Calu3 (cell line): ENCODE measurements at regions of chr2 and their contacts with region 1.

Region 1: DNA sequence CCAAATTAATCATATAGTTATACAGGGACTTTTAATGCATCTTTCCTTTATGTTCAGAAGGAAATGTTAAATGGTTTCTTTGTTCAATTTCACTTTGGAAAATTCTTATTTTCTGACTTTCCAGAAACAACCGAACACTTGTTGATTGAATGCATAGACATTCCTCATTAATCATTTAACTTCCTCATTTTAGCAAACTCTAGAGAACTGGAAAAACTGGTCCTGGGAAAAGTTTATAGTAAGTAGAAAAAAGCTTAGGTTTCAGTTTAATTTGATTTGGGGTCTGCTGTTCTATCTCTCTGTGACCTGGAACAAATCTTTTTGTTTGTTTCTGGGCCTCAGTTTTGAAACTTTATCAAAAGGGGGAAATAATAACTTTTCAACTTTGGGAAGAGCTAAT is 320.4 kb downstream of the CMPK2 start:
- DNase-seq: no peak
- H3K4me3 Mint-ChIP-seq: no peak overlapping the region
- H3K27ac Mint-ChIP-seq: peak overlapping the region; percentile 47
- H3K4me1 Mint-ChIP-seq: peaks cover 19% of the 10 kb centered on the region
- H3K27me3 Mint-ChIP-seq: no peaks in the 10 kb centered on the region
- CTCF ChIP-seq: no peak

Region 2: DNA sequence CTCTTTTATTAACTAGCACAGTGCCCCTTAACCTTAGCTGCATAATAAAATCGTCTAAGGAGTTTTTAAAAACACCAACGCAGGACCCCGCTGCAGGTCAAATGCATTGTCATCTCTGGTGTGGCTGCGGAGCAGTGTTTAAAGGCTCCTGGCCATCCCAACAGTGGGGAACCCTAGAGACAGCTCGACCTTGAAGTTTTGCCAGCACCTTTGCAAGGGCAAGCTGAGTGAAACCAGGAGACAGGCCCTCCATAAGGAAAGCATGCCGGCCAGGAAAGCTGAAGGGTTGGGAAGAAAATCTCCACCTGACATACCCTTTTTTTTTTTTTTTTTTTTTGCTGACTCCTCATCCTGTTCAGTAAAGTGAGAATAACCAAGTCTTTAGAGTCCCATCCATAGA is 28.7 kb before region 1 on chr2:
- CTCF ChIA-PET with region 1: interaction called, 10 read pairs
- intact Hi-C with region 1: no loop called
- DNase-seq: no peak
- H3K4me3 Mint-ChIP-seq: no peak overlapping the region
- H3K27ac Mint-ChIP-seq: no peak overlapping the region
- H3K4me1 Mint-ChIP-seq: no peaks in the 10 kb centered on the region
- H3K27me3 Mint-ChIP-seq: no peaks in the 10 kb centered on the region
- CTCF ChIP-seq: no peak

Region 3: GRCh38 chr2:6580982-6581381 is 35.6 kb after region 1 on chr2:
- CTCF ChIA-PET with region 1: no interaction called
- intact Hi-C with region 1: no loop called
- DNase-seq: no peak
- H3K4me3 Mint-ChIP-seq: no peak overlapping the region
- H3K27ac Mint-ChIP-seq: no peak overlapping the region
- H3K4me1 Mint-ChIP-seq: no peaks in the 10 kb centered on the region
- H3K27me3 Mint-ChIP-seq: no peaks in the 10 kb centered on the region
- CTCF ChIP-seq: no peak

Region 4: GRCh38 chr2:6999211-6999877 is 454.0 kb after region 1 on chr2:
- CTCF ChIA-PET with region 1: no interaction called
- intact Hi-C with region 1: no loop called
- DNase-seq: no peak
- H3K4me3 Mint-ChIP-seq: no peak overlapping the region
- H3K27ac Mint-ChIP-seq: no peak overlapping the region
- H3K4me1 Mint-ChIP-seq: no peaks in the 10 kb centered on the region
- H3K27me3 Mint-ChIP-seq: no peaks in the 10 kb centered on the region
- CTCF ChIP-seq: no peak

Region 5: GRCh38 chr2:7057865-7058400 is 512.6 kb after region 1 on chr2:
- CTCF ChIA-PET with region 1: no interaction called
- intact Hi-C with region 1: no loop called
- DNase-seq: no peak
- H3K4me3 Mint-ChIP-seq: no peak overlapping the region
- H3K27ac Mint-ChIP-seq: no peak overlapping the region
- H3K4me1 Mint-ChIP-seq: no peaks in the 10 kb centered on the region
- H3K27me3 Mint-ChIP-seq: no peaks in the 10 kb centered on the region
- CTCF ChIP-seq: no peak